Common myeloid progenitor, CD34-positive (primary cell): ENCODE measurements at regions of chr19 and their contacts with region 1.

Region 1: GRCh38 chr19:40777937-40778705 is at the start of gene RAB4B:
- DNase-seq: peak; percentile 100
- H3K4me3 ChIP-seq: peak within 1 kb of the TSS; percentile 47 to 97 (median 78)
- H3K27ac ChIP-seq: peak within 1 kb of the TSS; percentile 94
- H3K4me1 ChIP-seq: peaks cover 6 to 33% (median 18%) of the 10 kb centered on the region in 4 experiments
- H3K27me3 ChIP-seq: no peaks in the 10 kb centered on the region

Region 2: GRCh38 chr19:40750059-40750873 is 27.9 kb before region 1 on chr19 and contains the start of gene ACTMAP:
- CTCF ChIA-PET with region 1: interaction called, 5 read pairs
- POLR2A ChIA-PET with region 1: interaction called, 15 read pairs
- DNase-seq: peak; percentile 100
- H3K4me3 ChIP-seq: peak within 1 kb of the TSS; percentile 65 to 91 (median 82)
- H3K27ac ChIP-seq: peak within 1 kb of the TSS; percentile 91 to 95
- H3K4me1 ChIP-seq: peaks cover 6 to 53% (median 39%) of the 10 kb centered on the region in 4 experiments
- H3K27me3 ChIP-seq: no peaks in the 10 kb centered on the region

Region 3: GRCh38 chr19:40798223-40798996 is 20.3 kb after region 1 on chr19:
- CTCF ChIA-PET with region 1: interaction called, 25 read pairs
- POLR2A ChIA-PET with region 1: interaction called, 28 read pairs
- DNase-seq: peak; percentile 100
- H3K4me3 ChIP-seq: peak overlapping the region; percentile 11 to 93 (median 73)
- H3K27ac ChIP-seq: peak overlapping the region; percentile 59 to 90
- H3K4me1 ChIP-seq: peaks cover 8 to 49% (median 47%) of the 10 kb centered on the region in 4 experiments
- H3K27me3 ChIP-seq: no peaks in the 10 kb centered on the region

Region 4: DNA sequence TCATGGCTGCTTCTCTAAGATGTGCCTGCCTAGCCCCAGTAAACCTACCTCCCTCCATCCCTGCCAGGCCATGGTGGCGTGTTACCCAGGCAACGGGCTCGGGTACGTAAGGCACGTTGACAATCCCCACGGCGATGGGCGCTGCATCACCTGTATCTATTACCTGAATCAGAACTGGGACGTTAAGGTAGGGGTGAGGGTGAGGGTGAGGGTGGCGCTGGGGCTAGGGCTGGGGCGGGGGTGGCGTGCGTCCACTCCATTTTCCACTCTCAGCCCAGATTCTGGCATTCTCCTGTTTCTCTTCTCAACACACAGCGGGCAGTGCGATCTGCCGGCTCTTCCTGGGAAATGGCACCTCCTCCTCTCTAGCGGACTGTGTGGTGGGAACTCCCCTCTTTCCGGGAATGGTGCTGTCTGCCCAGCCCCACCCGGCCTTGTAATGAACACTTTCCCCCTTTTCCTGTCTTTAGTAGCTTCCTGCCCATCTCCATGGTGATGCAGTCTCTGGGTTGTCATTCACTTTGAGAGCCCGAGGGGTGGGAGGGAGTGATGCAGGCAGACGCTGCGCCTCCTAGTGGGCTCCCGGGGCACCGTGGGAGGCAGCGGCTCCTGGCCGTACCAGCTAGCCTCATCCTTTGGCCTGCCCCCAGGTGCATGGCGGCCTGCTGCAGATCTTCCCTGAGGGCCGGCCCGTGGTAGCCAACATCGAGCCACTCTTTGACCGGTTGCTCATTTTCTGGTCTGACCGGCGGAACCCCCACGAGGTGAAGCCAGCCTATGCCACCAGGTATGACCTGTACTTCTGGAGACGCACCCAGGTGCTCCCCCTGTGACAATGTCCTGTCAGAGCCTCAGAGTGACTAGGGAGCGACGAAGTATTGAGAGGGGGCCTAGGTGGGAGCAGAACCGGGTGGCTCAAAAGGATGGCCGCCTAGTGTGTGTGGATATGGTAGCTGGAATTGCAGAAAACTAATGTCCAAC is 28.7 kb after region 1 on chr19:
- CTCF ChIA-PET with region 1: interaction called, 25 read pairs
- POLR2A ChIA-PET with region 1: interaction called, 9 read pairs
- DNase-seq: peak; percentile 78 to 85 (median 84)
- H3K4me3 ChIP-seq: peak overlapping the region in 3 of 7 experiments; percentile 2 to 58 (median 22)
- H3K27ac ChIP-seq: peak overlapping the region in 1 of 2 experiments; percentile 46
- H3K4me1 ChIP-seq: peaks cover 1 to 72% (median 65%) of the 10 kb centered on the region in 4 experiments
- H3K27me3 ChIP-seq: no peaks in the 10 kb centered on the region

Region 5: DNA sequence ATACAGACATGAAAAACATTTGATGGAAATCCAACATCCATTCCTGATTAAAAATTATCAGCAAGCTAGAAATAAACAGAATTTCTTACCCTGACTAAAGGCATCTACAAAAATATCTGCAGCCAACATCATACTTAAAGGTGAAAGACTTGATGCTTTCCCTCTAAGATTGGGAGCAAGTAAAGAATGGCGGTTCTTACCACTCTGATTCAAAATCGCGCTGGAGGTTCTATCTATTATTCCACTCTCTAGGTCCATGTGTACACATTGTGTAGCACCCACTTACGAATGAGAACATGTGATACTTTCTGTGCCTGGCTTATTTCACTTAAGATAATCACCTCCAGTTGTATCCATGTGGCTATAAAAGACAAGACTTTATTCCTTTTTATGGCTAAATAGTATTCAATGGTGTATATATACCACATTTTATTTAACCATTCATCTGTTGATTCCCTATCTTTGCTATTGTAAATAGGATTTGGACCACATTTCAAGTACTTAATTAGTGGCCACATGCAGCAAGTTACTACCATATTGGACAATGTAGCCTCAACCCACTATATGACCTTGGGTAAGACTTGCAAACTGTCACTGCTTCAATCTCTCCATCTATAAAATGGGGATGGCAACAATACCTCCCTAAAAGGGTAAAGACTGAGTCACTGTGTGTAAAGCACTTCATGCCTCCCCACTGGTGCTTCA is 142.3 kb after region 1 on chr19:
- CTCF ChIA-PET with region 1: no interaction called
- POLR2A ChIA-PET with region 1: no interaction called
- DNase-seq: no peak
- H3K4me3 ChIP-seq: no peak overlapping the region
- H3K27ac ChIP-seq: no peak overlapping the region
- H3K4me1 ChIP-seq: no peaks in the 10 kb centered on the region
- H3K27me3 ChIP-seq: no peaks in the 10 kb centered on the region